Activated CD8-positive, alpha-beta T cell treated with anti-CD3 and anti-CD28 coated beads for 36 hours (primary cell): ENCODE measurements at regions of chr1 and their contacts with region 1.

Region 1: GRCh38 chr1:160777486-160778089 is 18.4 kb upstream of the LY9 start:
- DNase-seq: peak; percentile 72
- ATAC-seq: peak; percentile 67
- H3K4me3 Mint-ChIP-seq: no peak overlapping the region
- H3K27ac Mint-ChIP-seq: peak overlapping the region; percentile 4
- H3K4me1 Mint-ChIP-seq: peaks cover 55% of the 10 kb centered on the region
- H3K27me3 Mint-ChIP-seq: no peaks in the 10 kb centered on the region
- CTCF ChIP-seq: peak; percentile 85

Region 2: DNA sequence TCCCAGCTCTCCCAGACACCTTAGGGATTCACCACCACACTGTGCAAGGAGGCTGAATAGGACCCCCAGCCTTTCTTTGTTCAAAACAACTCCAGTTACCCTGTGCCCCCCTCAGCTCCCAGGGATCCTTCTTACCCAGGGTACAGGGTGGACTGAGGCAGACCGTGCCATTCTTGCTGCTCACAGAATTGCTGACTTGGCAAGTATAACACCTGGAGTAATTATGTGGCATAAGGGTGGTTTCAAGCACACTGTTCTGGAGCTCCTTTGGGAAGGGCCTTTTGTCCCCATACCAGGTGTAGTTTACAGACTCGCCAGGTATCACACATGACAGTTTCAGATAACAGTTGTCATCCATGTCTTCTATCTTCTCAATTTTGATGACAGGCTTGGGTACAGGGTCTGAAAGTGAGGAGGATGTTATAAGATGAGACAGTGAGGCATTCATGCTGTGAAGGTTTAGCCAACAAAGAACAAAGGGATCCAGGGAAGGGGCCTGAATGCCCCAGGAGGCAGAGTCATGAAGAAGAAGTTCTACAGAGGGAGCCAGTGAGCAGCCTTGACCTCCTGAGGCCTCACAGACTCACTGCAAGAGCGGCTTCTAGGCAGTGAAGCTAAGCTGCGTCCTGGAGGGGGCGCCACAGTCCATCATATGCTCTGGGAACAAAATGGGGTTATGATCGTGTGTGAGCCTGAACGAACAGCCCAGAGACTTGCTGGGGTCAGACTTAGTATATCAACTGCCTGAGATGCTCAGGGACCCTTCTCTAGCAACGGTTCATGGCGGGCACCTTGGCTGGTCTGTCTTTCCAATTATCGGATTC is 96.3 kb before region 1 on chr1:
- CTCF ChIA-PET with region 1: interaction called, 15 read pairs
- POLR2A ChIA-PET with region 1: interaction called, 3 read pairs
- intact Hi-C with region 1: no loop called
- DNase-seq: peak; percentile 96
- ATAC-seq: peak; percentile 74
- H3K4me3 Mint-ChIP-seq: no peak overlapping the region
- H3K27ac Mint-ChIP-seq: peak overlapping the region; percentile 95
- H3K4me1 Mint-ChIP-seq: peaks cover 67% of the 10 kb centered on the region
- H3K27me3 Mint-ChIP-seq: no peaks in the 10 kb centered on the region
- CTCF ChIP-seq: peak; percentile 97

Region 3: GRCh38 chr1:160731990-160732389 is 45.6 kb before region 1 on chr1:
- CTCF ChIA-PET with region 1: interaction called, 138 read pairs
- POLR2A ChIA-PET with region 1: interaction called, 3 read pairs
- intact Hi-C with region 1: no loop called
- DNase-seq: no peak
- ATAC-seq: no peak
- H3K4me3 Mint-ChIP-seq: no peak overlapping the region
- H3K27ac Mint-ChIP-seq: peak overlapping the region; percentile 13
- H3K4me1 Mint-ChIP-seq: peaks cover 45% of the 10 kb centered on the region
- H3K27me3 Mint-ChIP-seq: no peaks in the 10 kb centered on the region
- CTCF ChIP-seq: no peak

Region 4: GRCh38 chr1:160806109-160806665 is 28.6 kb after region 1 on chr1:
- CTCF ChIA-PET with region 1: interaction called, 76 read pairs
- POLR2A ChIA-PET with region 1: interaction called, 5 read pairs
- intact Hi-C with region 1: loop called (anchors 5 kb)
- DNase-seq: no peak
- ATAC-seq: peak; percentile 45
- H3K4me3 Mint-ChIP-seq: no peak overlapping the region
- H3K27ac Mint-ChIP-seq: peak overlapping the region; percentile 82
- H3K4me1 Mint-ChIP-seq: peaks cover 83% of the 10 kb centered on the region
- H3K27me3 Mint-ChIP-seq: no peaks in the 10 kb centered on the region
- CTCF ChIP-seq: peak; percentile 46

Region 5: DNA sequence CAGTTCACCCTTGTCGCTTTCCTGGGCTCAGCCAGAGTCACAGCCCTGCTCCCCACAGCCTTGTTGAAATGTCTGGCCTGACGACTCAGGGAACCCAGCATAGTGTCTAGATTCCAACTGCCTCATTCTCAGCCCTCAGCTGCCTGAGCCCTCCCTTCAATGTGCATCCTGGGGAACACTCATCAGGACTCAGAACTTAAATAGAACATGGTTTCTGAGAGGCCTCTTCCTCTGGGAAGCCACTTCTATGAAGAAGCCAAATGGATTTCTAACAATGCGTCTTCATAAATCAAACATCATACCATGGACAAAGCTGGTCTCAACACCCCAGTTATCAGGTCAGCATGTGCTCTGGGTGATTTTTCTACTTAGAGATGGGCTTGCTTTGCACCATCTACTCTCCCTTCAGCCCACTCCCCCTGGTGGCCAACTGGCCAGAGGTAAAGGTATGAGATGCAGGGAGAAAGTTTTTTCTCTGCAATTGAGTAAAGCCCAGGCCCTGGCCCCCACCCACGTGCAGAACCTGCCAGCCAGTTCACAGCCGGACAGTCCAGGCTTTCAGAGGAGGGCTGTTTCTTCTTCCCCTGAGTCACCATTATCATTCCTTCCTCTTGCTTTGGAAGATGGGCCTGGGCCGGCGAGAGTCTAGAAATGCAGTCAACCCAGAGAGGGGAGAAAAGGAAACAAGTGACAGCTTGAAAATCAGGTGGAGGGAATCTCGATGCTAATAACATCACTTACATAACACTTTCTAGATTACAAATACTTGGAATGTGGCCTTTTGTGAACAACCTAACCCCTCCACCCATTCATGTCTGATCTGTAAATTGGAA is 52.9 kb after region 1 on chr1:
- CTCF ChIA-PET with region 1: interaction called, 107 read pairs
- POLR2A ChIA-PET with region 1: interaction called, 3 read pairs
- intact Hi-C with region 1: loop called (anchors 2 kb)
- DNase-seq: peak; percentile 89
- ATAC-seq: peak; percentile 84
- H3K4me3 Mint-ChIP-seq: no peak overlapping the region
- H3K27ac Mint-ChIP-seq: peak overlapping the region; percentile 62
- H3K4me1 Mint-ChIP-seq: peaks cover 34% of the 10 kb centered on the region
- H3K27me3 Mint-ChIP-seq: no peaks in the 10 kb centered on the region
- CTCF ChIP-seq: peak; percentile 68

Region 6: DNA sequence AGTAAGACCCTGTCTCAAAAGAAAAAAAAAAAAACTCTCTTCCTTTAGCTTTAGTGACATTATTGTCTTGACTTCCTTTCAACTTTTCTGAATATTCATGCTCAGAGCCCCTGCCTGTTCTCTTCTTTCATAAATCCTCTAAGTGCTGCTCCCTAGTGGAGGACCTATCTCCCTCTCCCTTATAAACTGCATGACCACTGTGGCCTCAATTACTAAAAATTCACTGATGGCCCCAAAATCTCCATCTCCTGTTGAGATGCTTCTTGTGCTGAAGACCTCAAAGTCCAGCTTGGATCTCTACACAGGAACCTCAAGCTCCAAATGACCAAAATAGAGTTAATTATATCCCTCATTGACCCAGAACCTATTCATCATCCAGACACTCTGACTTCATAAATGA is 99.6 kb after region 1 on chr1:
- CTCF ChIA-PET with region 1: interaction called, 24 read pairs
- POLR2A ChIA-PET with region 1: no interaction called
- intact Hi-C with region 1: no loop called
- DNase-seq: peak; percentile 28
- ATAC-seq: peak; percentile 80
- H3K4me3 Mint-ChIP-seq: no peak overlapping the region
- H3K27ac Mint-ChIP-seq: peak overlapping the region; percentile 19
- H3K4me1 Mint-ChIP-seq: peaks cover 30% of the 10 kb centered on the region
- H3K27me3 Mint-ChIP-seq: no peaks in the 10 kb centered on the region
- CTCF ChIP-seq: peak; percentile 60